ENCODE measurements at regions of chr12 and their contacts with region 1.

Region 1: GRCh38 chr12:122980183-122981046 is at the start of gene ARL6IP4:
- DNase-seq: peak; percentile 56
- H3K4me3 Mint-ChIP-seq: peak within 1 kb of the TSS; percentile 85
- H3K27ac Mint-ChIP-seq: peak within 1 kb of the TSS; percentile 67
- H3K4me1 Mint-ChIP-seq: peaks cover 10% of the 10 kb centered on the region
- H3K27me3 Mint-ChIP-seq: no peaks in the 10 kb centered on the region
- CTCF ChIP-seq: no peak
- total RNA-seq, gene ARL6IP4: 198 and 238 TPM in 2 replicates

Region 2: DNA sequence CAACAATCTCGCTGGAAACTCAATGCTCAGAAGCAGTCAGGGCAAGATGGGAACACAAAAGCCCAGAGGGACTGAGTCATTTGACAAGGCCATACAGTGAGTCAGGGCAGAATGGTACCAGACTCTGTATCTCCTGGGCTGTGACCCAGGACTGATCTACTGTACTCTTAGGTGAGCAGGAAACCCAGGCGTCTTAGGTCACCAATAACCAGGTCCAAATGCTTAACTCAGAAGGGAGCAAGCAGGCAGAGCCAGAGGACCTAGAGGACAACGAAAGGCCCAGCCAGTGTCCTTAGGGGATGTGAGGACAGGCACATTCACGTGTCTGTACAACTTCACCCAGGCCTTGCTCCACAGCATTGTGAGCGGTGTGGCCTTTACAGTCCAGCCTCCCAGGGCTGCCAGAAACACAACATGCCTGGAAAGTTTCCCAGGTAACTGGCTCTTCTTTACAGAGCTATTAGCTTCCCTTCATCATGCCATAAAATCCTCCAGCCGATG is 70.0 kb after region 1 on chr12:
- CTCF ChIA-PET with region 1: no interaction called
- POLR2A ChIA-PET with region 1: no interaction called
- intact Hi-C with region 1: no loop called
- DNase-seq: peak; percentile 14
- H3K4me3 Mint-ChIP-seq: no peak overlapping the region
- H3K27ac Mint-ChIP-seq: no peak overlapping the region
- H3K4me1 Mint-ChIP-seq: peaks cover 15% of the 10 kb centered on the region
- H3K27me3 Mint-ChIP-seq: no peaks in the 10 kb centered on the region
- CTCF ChIP-seq: no peak

Region 3: GRCh38 chr12:123150744-123151456 is 170.5 kb after region 1 on chr12 and contains the start of gene PITPNM2:
- CTCF ChIA-PET with region 1: interaction called, 3 read pairs
- POLR2A ChIA-PET with region 1: interaction called, 5 read pairs
- intact Hi-C with region 1: loop called (anchors 5 kb)
- DNase-seq: peak; percentile 56
- H3K4me3 Mint-ChIP-seq: peak within 1 kb of the TSS; percentile 57
- H3K27ac Mint-ChIP-seq: peak within 1 kb of the TSS; percentile 14
- H3K4me1 Mint-ChIP-seq: no peaks in the 10 kb centered on the region
- H3K27me3 Mint-ChIP-seq: no peaks in the 10 kb centered on the region
- CTCF ChIP-seq: no peak
- total RNA-seq, gene PITPNM2: 7.2 and 10.5 TPM in 2 replicates